Activated T-helper 2 cell treated with anti-CD3 and anti-CD28 coated beads, Interferon-gamma antibody, Interleukin-2, Interleukin-4, amounts not matched to agents 10 μg/mL and 5 μg/mL and 100 μg/mL, durations not matched to agents 14 hours and 24 hours and 36 hours (primary cell): ENCODE measurements at regions of chrX and their contacts with region 1.

Region 1: GRCh38 chrX:53563324-53563723 is 123.2 kb downstream of the HUWE1 start:
- DNase-seq: no peak
- H3K4me3 Mint-ChIP-seq: no peak overlapping the region
- H3K27ac Mint-ChIP-seq: no peak overlapping the region
- H3K4me1 Mint-ChIP-seq: no peaks in the 10 kb centered on the region
- H3K27me3 Mint-ChIP-seq: no peaks in the 10 kb centered on the region

Region 2: DNA sequence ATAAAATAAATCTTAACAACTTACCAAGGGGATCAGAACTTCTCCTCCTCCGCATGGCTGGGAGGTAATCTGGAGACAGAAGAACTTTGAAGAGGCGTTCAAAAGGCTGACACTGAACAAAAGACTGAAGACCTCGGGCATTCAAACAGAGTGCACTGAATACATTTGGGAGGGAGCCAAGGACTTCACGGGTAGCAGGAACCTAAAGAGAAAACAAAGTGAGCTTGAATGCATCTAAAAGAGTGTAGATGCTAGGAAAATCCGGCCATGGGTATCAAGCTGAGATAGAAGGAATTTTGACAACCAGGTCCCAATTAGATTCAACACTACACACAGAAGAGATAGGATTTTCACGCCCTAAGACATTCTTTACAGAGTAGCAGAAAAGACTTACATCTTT is 53.6 kb after region 1 on chrX:
- intact Hi-C with region 1: loop called (anchors 10 kb)
- DNase-seq: no peak
- H3K4me3 Mint-ChIP-seq: no peak overlapping the region
- H3K27ac Mint-ChIP-seq: no peak overlapping the region
- H3K4me1 Mint-ChIP-seq: peaks cover 10% of the 10 kb centered on the region
- H3K27me3 Mint-ChIP-seq: no peaks in the 10 kb centered on the region

Region 3: DNA sequence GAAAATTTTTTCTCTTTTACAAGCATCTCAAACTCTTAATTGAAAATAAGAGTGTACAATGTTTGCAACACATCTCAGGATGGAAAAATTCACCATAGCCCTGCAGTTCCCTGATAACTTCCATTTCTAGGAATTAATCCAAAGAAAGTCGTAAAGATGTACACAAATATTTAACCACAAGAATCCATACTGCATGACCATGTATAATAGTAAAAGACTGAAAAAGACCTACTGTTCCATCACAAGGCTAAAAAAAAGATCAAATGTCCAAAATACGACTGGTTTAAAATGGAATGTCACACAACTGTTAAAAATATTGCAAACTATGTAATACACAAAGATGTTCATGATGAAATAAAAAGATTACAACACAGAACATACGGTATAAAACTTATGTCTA is 91.1 kb after region 1 on chrX:
- intact Hi-C with region 1: no loop called
- DNase-seq: no peak
- H3K4me3 Mint-ChIP-seq: no peak overlapping the region
- H3K27ac Mint-ChIP-seq: no peak overlapping the region
- H3K4me1 Mint-ChIP-seq: peaks cover 17% of the 10 kb centered on the region
- H3K27me3 Mint-ChIP-seq: no peaks in the 10 kb centered on the region